Caco-2 (cell line): ENCODE measurements at regions of chr1 and their contacts with region 1.

Region 1: DNA sequence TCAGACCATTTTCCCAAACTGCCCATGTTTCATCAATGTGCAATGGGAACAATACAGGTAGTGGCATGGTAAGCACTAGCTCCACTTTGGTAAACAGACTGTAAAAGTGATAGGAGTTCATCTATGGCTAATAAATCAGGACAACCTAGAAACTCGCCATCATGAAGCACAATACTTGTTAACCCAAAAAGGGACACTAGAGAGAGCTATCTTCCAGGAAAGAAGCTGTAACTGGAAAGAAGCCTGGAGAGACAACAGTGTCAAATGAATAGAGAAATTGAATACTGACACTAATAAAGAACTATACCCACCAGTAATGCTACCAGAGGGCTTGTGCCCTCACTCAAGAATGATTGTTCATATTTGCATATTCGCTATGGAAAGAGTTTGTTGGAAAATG is 164.7 kb upstream of the RGS18 start:
- DNase-seq: no peak
- H3K4me3 ChIP-seq: no peak overlapping the region
- H3K4me3 Mint-ChIP-seq: no peak overlapping the region
- H3K27ac Mint-ChIP-seq: no peak overlapping the region
- H3K4me1 ChIP-seq: no peaks in the 10 kb centered on the region
- H3K4me1 Mint-ChIP-seq: no peaks in the 10 kb centered on the region
- H3K27me3 ChIP-seq: no peaks in the 10 kb centered on the region
- H3K27me3 Mint-ChIP-seq: no peaks in the 10 kb centered on the region
- CTCF ChIP-seq: peak in 1 of 2 experiments; percentile 24

Region 2: DNA sequence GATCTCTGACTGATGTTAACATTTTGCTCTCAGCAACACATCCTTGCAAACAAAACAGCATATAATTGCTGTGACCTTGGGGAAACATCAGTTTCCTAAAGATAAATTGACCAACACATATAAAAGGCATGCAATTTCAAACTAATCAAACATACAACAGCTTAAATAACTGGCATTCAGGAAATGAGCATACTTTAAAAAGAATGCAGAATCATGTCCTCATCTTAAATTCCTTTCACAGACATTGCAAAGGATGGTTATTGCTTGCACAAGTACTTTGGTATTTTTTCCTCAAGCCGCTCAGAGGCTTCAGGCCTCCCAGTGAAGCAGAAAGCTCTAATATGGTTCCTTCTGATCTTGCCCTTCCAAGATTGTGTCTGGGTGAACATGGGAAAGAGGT is 111.3 kb after region 1 on chr1:
- CTCF ChIA-PET with region 1: no interaction called
- POLR2A ChIA-PET with region 1: no interaction called
- intact Hi-C with region 1: loop called (anchors 10 kb)
- DNase-seq: no peak
- H3K4me3 ChIP-seq: no peak overlapping the region
- H3K4me3 Mint-ChIP-seq: no peak overlapping the region
- H3K27ac Mint-ChIP-seq: no peak overlapping the region
- H3K4me1 ChIP-seq: peaks cover 3% of the 10 kb centered on the region; the same call in 1 of the 2 replicates
- H3K4me1 Mint-ChIP-seq: peaks cover 5% of the 10 kb centered on the region
- H3K27me3 ChIP-seq: no peaks in the 10 kb centered on the region
- H3K27me3 Mint-ChIP-seq: no peaks in the 10 kb centered on the region
- CTCF ChIP-seq: no peak

Region 3: GRCh38 chr1:192238421-192238820 is 244.9 kb after region 1 on chr1:
- CTCF ChIA-PET with region 1: no interaction called
- POLR2A ChIA-PET with region 1: no interaction called
- intact Hi-C with region 1: loop called (anchors 1 kb)
- DNase-seq: no peak
- H3K4me3 ChIP-seq: no peak overlapping the region
- H3K4me3 Mint-ChIP-seq: no peak overlapping the region
- H3K27ac Mint-ChIP-seq: no peak overlapping the region
- H3K4me1 ChIP-seq: no peaks in the 10 kb centered on the region
- H3K4me1 Mint-ChIP-seq: no peaks in the 10 kb centered on the region
- H3K27me3 ChIP-seq: no peaks in the 10 kb centered on the region
- H3K27me3 Mint-ChIP-seq: peaks cover 3% of the 10 kb centered on the region
- CTCF ChIP-seq: no peak

Region 4: GRCh38 chr1:192311281-192311680 is 317.7 kb after region 1 on chr1:
- CTCF ChIA-PET with region 1: no interaction called
- POLR2A ChIA-PET with region 1: no interaction called
- intact Hi-C with region 1: loop called (anchors 1 kb)
- DNase-seq: no peak
- H3K4me3 ChIP-seq: no peak overlapping the region
- H3K4me3 Mint-ChIP-seq: no peak overlapping the region
- H3K27ac Mint-ChIP-seq: no peak overlapping the region
- H3K4me1 ChIP-seq: no peaks in the 10 kb centered on the region
- H3K4me1 Mint-ChIP-seq: no peaks in the 10 kb centered on the region
- H3K27me3 ChIP-seq: no peaks in the 10 kb centered on the region
- H3K27me3 Mint-ChIP-seq: no peaks in the 10 kb centered on the region
- CTCF ChIP-seq: no peak